ENCODE measurements at regions of chr5 and their contacts with region 1.

Region 1: DNA sequence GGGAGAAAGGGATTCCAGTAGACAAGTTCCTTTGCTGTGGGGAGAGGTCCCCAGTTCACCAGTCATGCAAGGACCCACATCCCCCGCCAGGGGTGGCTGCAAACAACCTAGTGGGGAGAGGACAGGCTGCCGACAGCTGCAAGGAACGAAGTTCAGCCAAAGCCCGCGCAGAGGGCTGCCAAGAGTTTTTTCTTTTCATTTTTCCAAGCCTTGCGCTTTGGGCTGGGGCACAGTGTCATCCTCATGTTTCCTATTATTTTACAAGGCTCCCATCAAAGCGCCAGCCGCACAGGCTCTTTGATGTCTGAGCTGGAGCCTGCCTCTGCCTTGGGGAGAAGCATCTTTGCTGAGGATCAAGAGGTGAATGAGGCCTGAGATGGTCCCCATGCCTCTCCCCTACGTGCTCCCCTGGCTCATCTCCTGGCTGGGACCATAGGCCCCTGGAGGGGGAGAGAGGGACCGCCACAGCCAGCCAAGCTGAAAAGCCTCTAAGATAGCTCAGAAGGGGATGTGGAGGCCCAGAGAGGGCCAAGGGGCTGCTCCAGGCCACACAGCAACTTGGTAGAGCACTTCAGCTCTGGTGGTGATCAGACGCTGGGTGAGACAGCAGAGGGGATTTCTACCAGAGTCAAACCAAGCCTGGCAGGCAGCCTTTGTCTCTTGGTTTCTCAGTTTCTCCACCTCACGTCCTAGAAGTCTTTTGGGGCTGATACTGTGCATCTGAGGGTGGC is 50.4 kb upstream of the SYNPO start:
- DNase-seq: peak; percentile 90
- H3K4me3 ChIP-seq: no peak overlapping the region
- H3K27ac ChIP-seq: no peak overlapping the region
- H3K4me1 ChIP-seq: peaks cover 14% of the 10 kb centered on the region
- H3K27me3 ChIP-seq: no peaks in the 10 kb centered on the region
- CTCF ChIP-seq: peak; percentile 52 to 87
- POLR2A ChIP-seq: no peak

Region 2: GRCh38 chr5:150245111-150245789 is 344.8 kb before region 1 on chr5:
- CTCF ChIA-PET with region 1: no interaction called
- POLR2A ChIA-PET with region 1: no interaction called
- dilution Hi-C with region 1: no loop called
- intact Hi-C with region 1: no loop called
- DNase-seq: no peak
- H3K4me3 ChIP-seq: no peak overlapping the region
- H3K27ac ChIP-seq: no peak overlapping the region
- H3K4me1 ChIP-seq: no peaks in the 10 kb centered on the region
- H3K27me3 ChIP-seq: peaks cover 0 to 5% of the 10 kb centered on the region in 2 experiments
- CTCF ChIP-seq: no peak
- POLR2A ChIP-seq: no peak

Region 3: DNA sequence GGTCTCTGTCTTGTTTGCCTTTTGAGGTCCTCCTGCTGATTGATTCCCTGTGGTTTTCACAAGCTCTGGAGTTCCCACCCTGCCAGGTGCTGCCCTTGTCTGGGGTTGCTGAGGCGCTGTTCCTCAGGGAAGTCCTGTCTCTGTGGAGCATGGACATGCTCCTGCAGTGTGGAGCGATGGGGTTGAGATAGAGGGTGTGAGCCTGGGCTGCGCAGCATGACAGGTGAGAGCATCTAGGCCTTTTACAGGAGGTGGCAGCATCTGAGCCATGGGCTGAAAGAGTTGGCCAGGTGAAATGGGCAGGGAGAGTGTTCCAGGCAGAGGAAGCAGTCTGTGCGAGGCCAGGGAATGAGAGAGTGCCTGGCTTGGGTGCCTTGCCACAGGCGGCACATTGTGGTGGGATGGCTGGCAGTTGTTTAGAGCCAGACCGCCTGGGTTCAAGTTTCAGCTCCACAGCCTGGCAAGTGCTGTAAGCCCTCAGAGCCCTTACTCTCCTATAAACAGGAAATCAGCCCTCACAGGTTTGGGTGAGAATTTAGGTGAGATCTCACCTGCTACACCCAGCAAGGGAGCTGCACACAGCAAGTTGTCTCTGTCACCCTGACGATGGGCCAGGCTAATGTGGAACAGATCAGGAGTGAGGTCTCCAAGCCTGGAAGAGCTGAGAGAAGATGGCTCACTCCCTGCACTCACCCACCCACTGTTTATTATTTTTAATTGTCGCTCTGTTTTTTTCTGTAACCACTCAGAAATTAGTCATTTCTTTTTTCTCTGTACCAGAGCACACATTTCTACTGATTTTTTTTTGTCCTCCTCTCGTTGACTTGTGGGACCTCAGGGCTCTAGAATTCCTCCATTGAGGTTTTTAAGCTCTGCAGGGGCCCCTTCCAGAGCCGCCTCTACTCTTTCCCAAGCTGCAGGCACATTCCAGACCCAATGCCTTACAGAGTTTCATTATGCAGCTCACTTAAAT is 213.0 kb before region 1 on chr5:
- CTCF ChIA-PET with region 1: no interaction called
- POLR2A ChIA-PET with region 1: no interaction called
- dilution Hi-C with region 1: no loop called
- intact Hi-C with region 1: no loop called
- DNase-seq: no peak
- H3K4me3 ChIP-seq: no peak overlapping the region
- H3K27ac ChIP-seq: no peak overlapping the region
- H3K4me1 ChIP-seq: no peaks in the 10 kb centered on the region
- H3K27me3 ChIP-seq: no peaks in the 10 kb centered on the region
- CTCF ChIP-seq: no peak
- POLR2A ChIP-seq: no peak

Region 4: DNA sequence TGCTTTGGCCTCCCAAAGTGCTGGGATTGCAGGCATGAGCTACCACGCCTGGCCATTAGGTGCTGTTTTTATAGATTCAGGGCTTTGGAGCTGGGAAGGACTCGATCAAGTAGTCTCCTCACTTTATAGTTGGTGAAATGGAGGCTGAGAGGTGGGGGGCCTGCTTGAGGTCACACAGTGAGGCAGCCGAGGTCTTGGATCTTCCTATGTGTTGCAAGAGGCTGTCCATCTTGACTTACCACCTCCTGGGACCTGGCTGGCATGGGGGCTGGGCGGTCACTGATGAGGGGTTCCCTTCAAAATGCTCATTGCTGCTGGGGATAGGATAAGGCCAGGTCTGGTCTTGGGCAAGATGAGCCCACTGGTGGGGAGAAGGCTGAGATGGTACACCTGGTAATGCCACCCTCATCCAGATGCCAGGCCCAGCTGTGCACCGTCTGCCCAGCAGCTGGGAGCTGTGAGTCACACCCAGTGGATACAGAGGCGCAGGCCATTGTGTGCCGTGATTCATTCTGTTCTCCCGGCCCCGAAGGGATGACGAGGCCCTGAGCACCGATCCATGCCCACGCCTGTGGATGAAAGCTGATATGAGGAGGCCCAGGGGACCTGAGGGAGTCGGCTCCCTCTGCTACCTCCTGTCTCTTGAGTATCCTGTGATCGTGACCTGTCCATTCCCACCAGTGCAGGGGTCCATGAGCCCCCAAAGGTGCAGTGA is 92.6 kb before region 1 on chr5:
- CTCF ChIA-PET with region 1: no interaction called
- POLR2A ChIA-PET with region 1: no interaction called
- dilution Hi-C with region 1: no loop called
- intact Hi-C with region 1: no loop called
- DNase-seq: peak; percentile 92
- H3K4me3 ChIP-seq: no peak overlapping the region
- H3K27ac ChIP-seq: peak overlapping the region; percentile 31
- H3K4me1 ChIP-seq: peaks cover 26% of the 10 kb centered on the region
- H3K27me3 ChIP-seq: no peaks in the 10 kb centered on the region
- CTCF ChIP-seq: no peak
- POLR2A ChIP-seq: no peak

Region 5: GRCh38 chr5:150612905-150613670 is 23.1 kb after region 1 on chr5:
- CTCF ChIA-PET with region 1: interaction called, 11 read pairs
- POLR2A ChIA-PET with region 1: no interaction called
- dilution Hi-C with region 1: no loop called
- intact Hi-C with region 1: no loop called
- DNase-seq: no peak
- H3K4me3 ChIP-seq: no peak overlapping the region
- H3K27ac ChIP-seq: no peak overlapping the region
- H3K4me1 ChIP-seq: peaks cover 29% of the 10 kb centered on the region
- H3K27me3 ChIP-seq: no peaks in the 10 kb centered on the region
- CTCF ChIP-seq: no peak
- POLR2A ChIP-seq: no peak

Region 6: DNA sequence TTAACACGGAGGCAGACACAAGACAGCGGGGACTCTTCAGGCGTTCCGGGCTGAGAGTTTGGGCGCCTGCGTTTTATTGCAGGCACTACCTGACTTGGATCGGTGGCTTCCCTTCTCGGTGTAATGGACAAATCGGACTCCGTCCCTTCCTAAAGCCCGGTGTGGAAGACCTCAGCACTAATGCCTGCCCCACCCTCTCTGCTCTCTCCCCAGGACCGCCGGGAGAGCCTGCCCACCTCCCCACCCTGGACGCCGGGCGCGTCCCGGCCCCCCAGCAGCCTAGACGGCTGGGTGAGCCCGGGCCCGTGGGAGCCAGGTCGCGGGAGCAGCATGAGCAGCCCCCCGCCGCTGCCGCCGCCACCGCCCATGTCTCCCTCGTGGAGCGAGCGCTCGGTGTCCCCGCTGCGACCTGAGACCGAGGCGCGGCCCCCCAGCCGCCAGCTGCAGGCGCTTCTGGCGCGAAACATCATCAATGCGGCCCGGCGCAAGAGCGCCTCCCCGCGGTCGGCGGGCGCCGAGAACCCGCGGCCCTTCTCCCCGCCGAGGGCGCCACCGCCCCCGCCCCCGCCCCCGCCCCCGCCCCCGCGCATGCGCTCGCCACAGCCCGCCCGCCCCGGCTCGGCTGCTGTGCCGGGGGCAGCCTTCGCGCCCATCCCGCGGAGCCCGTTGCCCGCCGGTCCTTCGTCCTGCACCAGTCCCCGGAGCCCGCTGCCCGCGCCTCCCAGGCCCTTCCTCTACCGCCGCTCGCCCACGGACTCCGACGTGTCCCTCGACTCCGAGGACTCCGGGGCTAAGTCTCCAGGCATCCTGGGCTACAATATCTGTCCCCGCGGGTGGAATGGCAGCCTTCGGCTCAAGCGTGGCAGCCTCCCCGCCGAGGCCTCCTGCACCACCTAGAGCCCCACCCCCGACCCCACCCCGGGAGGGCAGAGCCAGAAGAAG is 66.4 kb after region 1 on chr5:
- CTCF ChIA-PET with region 1: interaction called, 33 read pairs
- POLR2A ChIA-PET with region 1: no interaction called
- dilution Hi-C with region 1: no loop called
- intact Hi-C with region 1: loop called (anchors 1 kb)
- DNase-seq: peak; percentile 46
- H3K4me3 ChIP-seq: no peak overlapping the region
- H3K27ac ChIP-seq: no peak overlapping the region
- H3K4me1 ChIP-seq: no peaks in the 10 kb centered on the region
- H3K27me3 ChIP-seq: peaks cover under 1 to 7% of the 10 kb centered on the region in 2 experiments
- CTCF ChIP-seq: peak; percentile 34 to 70
- POLR2A ChIP-seq: peak; percentile 58

Region 7: GRCh38 chr5:150758531-150759333 is 168.7 kb after region 1 on chr5 and contains the start of gene DCTN4:
- CTCF ChIA-PET with region 1: no interaction called
- POLR2A ChIA-PET with region 1: no interaction called
- dilution Hi-C with region 1: no loop called
- intact Hi-C with region 1: no loop called
- DNase-seq: peak; percentile 99
- H3K4me3 ChIP-seq: peak within 1 kb of the TSS; percentile 62 to 80 (median 62)
- H3K27ac ChIP-seq: peak within 1 kb of the TSS; percentile 76
- H3K4me1 ChIP-seq: peaks cover 13% of the 10 kb centered on the region
- H3K27me3 ChIP-seq: peaks cover 0 to 5% of the 10 kb centered on the region in 2 experiments
- CTCF ChIP-seq: no peak
- POLR2A ChIP-seq: peak; percentile 84
- total RNA-seq, gene DCTN4: 42.8 and 47.3 TPM in 2 replicates